HepG2 (cell line): ENCODE measurements at regions of chr10 and their contacts with region 1.

Region 1: DNA sequence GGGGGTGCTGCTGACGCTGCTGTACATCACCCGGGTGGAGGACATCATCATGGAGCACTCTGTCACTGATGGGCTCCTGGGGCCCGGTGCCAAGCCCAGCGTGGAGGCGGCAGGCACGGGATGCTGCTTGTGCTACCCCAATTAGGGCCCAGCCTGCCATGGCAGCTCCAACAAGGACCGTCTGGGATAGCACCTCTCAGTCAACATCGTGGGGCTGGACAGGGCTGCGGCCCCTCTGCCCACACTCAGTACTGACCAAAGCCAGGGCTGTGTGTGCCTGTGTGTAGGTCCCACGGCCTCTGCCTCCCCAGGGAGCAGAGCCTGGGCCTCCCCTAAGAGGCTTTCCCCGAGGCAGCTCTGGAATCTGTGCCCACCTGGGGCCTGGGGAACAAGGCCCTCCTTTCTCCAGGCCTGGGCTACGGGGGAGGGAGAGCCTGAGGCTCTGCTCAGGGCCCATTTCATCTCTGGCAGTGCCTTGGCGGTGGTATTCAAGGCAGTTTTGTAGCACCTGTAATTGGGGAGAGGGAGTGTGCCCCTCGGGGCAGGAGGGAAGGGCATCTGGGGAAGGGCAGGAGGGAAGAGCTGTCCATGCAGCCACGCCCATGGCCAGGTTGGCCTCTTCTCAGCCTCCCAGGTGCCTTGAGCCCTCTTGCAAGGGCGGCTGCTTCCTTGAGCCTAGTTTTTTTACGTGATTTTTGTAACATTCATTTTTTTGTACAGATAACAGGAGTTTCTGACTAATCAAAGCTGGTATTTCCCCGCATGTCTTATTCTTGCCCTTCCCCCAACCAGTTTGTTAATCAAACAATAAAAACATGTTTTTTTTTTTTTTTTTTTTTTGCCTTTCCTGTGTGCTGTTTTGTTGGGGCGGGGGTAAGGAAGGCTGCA is 55.8 kb downstream of the TSPAN15 start:
- DNase-seq: no peak
- ATAC-seq: peak; percentile 28
- H3K4me3 ChIP-seq: no peak overlapping the region
- H3K27ac ChIP-seq: no peak overlapping the region
- H3K4me1 ChIP-seq: no peaks in the 10 kb centered on the region
- H3K27me3 ChIP-seq: no peaks in the 10 kb centered on the region; a peak in 1 of 5 replicates
- CTCF ChIP-seq: no peak
- EP300 ChIP-seq: no peak
- POLR2A ChIP-seq: no peak
- RAD21 ChIP-seq: no peak

Region 2: GRCh38 chr10:69237528-69238159 is 269.4 kb before region 1 on chr10:
- CTCF ChIA-PET with region 1: interaction called, 3 read pairs
- POLR2A ChIA-PET with region 1: no interaction called
- in situ Hi-C with region 1: loop called (anchors 10 kb)
- intact Hi-C with region 1: loop called (anchors 1 kb)
- DNase-seq: peak; percentile 50
- ATAC-seq: peak; percentile 99
- H3K4me3 ChIP-seq: no peak overlapping the region
- H3K27ac ChIP-seq: no peak overlapping the region
- H3K4me1 ChIP-seq: no peaks in the 10 kb centered on the region
- H3K27me3 ChIP-seq: no peaks in the 10 kb centered on the region
- CTCF ChIP-seq: peak; percentile 93
- EP300 ChIP-seq: no peak
- POLR2A ChIP-seq: no peak
- RAD21 ChIP-seq: peak; percentile 87

Region 3: GRCh38 chr10:69408318-69409175 is 98.5 kb before region 1 on chr10:
- CTCF ChIA-PET with region 1: interaction called, 56 read pairs
- POLR2A ChIA-PET with region 1: no interaction called
- in situ Hi-C with region 1: loop called (anchors 5 kb)
- intact Hi-C with region 1: loop called (anchors 1 kb)
- DNase-seq: peak; percentile 80
- ATAC-seq: peak; percentile 81
- H3K4me3 ChIP-seq: peak overlapping the region in 1 of 3 experiments; percentile 21; a peak in 2 of 6 replicates
- H3K27ac ChIP-seq: no peak overlapping the region
- H3K4me1 ChIP-seq: peaks cover 13% of the 10 kb centered on the region
- H3K27me3 ChIP-seq: 0 out of 5 replicates have a peak, but pooled peaks cover 0 to 4% of the 10 kb centered on the region in 2 experiments
- CTCF ChIP-seq: peak; percentile 79
- EP300 ChIP-seq: no peak
- POLR2A ChIP-seq: no peak
- RAD21 ChIP-seq: peak; percentile 44

Region 4: DNA sequence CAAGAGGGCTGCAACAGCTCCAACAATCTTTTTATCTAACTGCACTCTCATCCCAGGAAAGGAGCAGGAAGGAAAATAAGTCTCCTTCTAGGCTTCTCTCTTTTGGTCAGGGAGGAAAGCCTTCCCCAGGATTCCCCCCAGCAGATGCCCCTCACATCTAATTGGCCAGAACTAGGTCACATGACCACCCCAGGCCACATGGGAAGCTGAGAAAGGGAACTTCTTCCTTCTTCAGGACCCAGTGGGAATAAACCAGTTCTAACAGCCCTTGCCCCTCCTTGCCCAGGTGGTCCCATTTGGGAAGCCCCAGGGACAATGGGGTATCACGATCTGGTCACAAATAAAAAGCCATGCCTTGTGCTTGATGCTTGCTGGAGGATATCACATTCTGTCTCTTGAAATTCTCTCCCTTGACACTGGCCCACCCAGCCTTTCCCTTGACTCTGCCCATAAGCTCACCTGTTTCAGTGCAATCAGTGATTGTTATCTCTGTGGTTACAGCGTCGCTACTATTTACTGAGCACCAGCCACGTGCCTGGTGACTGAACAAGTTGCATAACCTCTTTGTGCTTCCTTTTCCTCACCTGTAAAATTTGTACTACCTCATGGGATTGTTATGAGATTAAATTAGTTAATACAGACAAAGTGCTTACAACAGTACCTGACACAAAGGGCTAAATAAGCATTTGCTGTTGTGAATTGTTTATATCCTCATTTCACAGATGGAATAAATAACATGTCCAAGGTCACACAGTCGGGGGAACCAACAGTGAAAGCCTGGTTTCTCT is 81.4 kb before region 1 on chr10:
- CTCF ChIA-PET with region 1: interaction called, 3 read pairs
- POLR2A ChIA-PET with region 1: no interaction called
- in situ Hi-C with region 1: no loop called
- intact Hi-C with region 1: loop called (anchors 1 kb)
- DNase-seq: peak; percentile 80
- ATAC-seq: peak; percentile 58
- H3K4me3 ChIP-seq: peak overlapping the region in 1 of 3 experiments; percentile 11; a peak in 1 of 6 replicates
- H3K27ac ChIP-seq: peak overlapping the region; percentile 21
- H3K4me1 ChIP-seq: peaks cover 53% of the 10 kb centered on the region
- H3K27me3 ChIP-seq: peaks cover 3 to 18% of the 10 kb centered on the region in 2 experiments; a peak in 3 of 5 replicates
- CTCF ChIP-seq: no peak
- EP300 ChIP-seq: peak in 1 of 2 experiments; percentile 85; a peak in 1 of 4 replicates
- POLR2A ChIP-seq: no peak
- RAD21 ChIP-seq: no peak